ENCODE measurements at regions of chr1 and their contacts with region 1.

Region 1: DNA sequence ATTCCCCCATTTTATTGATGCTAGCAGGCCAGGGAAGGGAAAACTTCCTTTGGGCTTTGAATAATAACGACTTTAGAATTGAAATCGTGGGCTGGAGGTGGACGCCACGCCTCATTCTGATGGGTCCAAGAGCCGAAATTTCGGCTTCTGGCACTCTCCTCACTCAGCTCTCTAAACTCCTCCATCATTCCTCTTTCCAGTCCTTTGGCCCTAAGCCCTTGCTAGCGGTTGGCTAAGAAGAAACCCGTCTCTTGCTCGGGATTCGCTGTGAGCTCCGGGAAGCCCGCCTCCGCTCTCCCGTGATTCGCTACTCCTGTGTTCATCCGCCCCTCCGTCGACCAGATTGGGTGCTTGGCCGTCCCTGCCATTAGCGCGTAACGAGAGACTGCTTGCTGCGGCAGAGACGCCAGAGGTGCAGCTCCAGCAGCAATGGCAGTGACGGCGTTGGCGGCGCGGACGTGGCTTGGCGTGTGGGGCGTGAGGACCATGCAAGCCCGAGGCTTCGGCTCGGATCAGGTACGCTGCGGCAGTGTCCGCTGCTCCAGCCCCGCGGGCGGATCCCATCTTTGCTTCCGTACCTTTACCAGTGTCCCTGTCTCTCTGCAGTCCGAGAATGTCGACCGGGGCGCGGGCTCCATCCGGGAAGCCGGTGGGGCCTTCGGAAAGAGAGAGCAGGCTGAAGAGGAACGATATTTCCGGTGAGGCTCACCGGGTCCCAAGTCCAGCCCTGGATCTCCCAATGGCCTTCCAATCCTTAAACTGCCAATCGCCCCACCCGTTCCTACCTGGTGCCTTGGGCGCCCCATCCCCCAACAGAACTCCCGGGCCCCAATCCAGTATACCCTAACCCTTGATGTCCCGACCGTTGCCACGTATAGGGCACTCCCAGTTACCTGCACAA is at the start of gene ATP5IF1:
- H3K4me3 ChIP-seq: peak within 1 kb of the TSS; percentile 77
- H3K27ac ChIP-seq: peak within 1 kb of the TSS; percentile 48; the same call in 1 of the 2 replicates
- H3K4me1 ChIP-seq: 0 out of 2 replicates have a peak, but pooled peaks cover 3% of the 10 kb centered on the region
- CTCF ChIP-seq: 0 out of 2 replicates have a peak, but pooled peaks have one; percentile 10

Region 2: DNA sequence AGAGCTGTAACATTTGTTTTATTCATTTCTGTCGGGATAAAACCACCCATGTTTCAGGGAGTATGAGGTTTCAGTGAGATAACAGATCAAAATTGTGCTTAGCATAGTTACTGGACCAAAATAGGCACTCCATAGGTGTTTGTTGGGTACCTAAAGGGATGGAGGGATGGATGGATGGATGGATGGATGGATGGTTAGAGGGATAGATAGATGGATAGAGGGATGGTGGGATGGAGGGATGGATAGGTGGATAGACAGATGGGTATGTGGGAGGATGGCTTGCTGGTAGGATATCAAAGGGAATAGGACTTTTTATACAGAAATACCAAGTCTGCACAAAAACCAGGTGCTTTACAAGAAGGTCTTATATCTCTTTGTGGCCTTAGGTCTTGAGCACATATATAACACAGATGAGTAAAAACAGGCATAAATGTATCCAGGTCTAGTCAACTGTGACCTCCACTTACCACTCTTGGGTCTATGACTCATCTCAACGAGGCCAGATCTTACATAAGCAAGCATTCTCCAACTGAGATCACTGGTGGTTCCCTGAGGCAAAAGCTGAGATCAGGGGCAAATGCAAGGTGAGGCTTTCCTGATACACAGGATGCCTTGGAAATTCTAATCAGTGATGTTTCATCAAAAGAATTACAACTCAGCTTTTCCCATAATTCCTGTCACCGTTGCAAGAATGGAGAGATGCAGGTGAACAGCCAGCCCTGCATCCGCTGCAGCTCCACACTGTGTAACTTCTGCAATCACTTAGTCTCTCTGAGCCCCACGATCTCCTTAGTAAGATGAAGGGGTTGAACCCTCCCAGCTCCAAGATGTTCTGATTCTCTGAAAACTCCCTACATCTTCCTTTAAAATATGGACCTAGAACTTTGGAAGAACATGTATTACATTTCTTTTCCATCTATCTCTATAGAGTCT is 91.5 kb before region 1 on chr1:
- CTCF ChIA-PET with region 1: no interaction called
- POLR2A ChIA-PET with region 1: no interaction called
- H3K4me3 ChIP-seq: no peak overlapping the region
- H3K27ac ChIP-seq: no peak overlapping the region
- H3K4me1 ChIP-seq: no peaks in the 10 kb centered on the region
- CTCF ChIP-seq: no peak

Region 3: GRCh38 chr1:28160782-28161266 is 75.2 kb before region 1 on chr1:
- CTCF ChIA-PET with region 1: no interaction called
- POLR2A ChIA-PET with region 1: no interaction called
- H3K4me3 ChIP-seq: no peak overlapping the region
- H3K27ac ChIP-seq: no peak overlapping the region
- H3K4me1 ChIP-seq: no peaks in the 10 kb centered on the region
- CTCF ChIP-seq: no peak

Region 4: GRCh38 chr1:28259307-28260167 is 23.5 kb after region 1 on chr1 and contains the start of gene SESN2:
- CTCF ChIA-PET with region 1: no interaction called
- POLR2A ChIA-PET with region 1: interaction called, 24 read pairs
- H3K4me3 ChIP-seq: peak within 1 kb of the TSS; percentile 97
- H3K27ac ChIP-seq: peak within 1 kb of the TSS; percentile 97
- H3K4me1 ChIP-seq: no peaks in the 10 kb centered on the region; the same call in 1 of the 2 replicates
- CTCF ChIP-seq: 0 out of 2 replicates have a peak, but pooled peaks have one; percentile 13

Measured in HEK293 (cell line).